Endothelial cell of umbilical vein (primary cell): ENCODE measurements at regions of chr11 and their contacts with region 1.

Region 1: DNA sequence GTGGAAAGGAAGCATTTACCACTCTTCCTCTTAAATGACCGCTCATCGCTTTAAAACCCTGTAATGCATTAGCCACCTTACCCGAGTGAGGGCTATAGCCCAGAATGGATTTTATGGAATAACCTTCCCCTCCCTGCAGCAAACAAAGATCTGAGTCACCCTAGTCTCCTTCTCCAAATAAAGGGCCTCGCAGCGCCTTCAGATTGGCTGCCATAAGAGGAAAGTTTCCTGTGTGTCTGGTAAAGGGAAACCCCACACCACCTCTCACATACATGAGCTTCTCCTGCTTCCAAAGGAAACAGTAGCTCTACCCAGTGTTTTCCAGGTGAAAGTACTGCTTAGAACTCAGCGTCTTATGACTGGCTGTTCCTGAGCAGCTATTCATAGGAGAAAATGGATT is 47.8 kb downstream of the PPP2R1B start:
- DNase-seq: peak; percentile 87
- H3K4me3 ChIP-seq: no peak overlapping the region
- H3K27ac ChIP-seq: peak overlapping the region; percentile 35
- H3K4me1 ChIP-seq: peaks cover 6% of the 10 kb centered on the region
- H3K27me3 ChIP-seq: no peaks in the 10 kb centered on the region
- CTCF ChIP-seq: no peak
- POLR2A ChIP-seq: no peak

Region 2: GRCh38 chr11:111635706-111636045 is 82.8 kb before region 1 on chr11:
- CTCF ChIA-PET with region 1: no interaction called
- POLR2A ChIA-PET with region 1: no interaction called
- dilution Hi-C with region 1: no loop called
- intact Hi-C with region 1: loop called (anchors 5 kb)
- DNase-seq: no peak
- H3K4me3 ChIP-seq: no peak overlapping the region
- H3K27ac ChIP-seq: no peak overlapping the region
- H3K4me1 ChIP-seq: peaks cover 23% of the 10 kb centered on the region
- H3K27me3 ChIP-seq: no peaks in the 10 kb centered on the region
- CTCF ChIP-seq: no peak
- POLR2A ChIP-seq: no peak

Region 3: GRCh38 chr11:111735262-111736116 is 17.1 kb after region 1 on chr11:
- CTCF ChIA-PET with region 1: interaction called, 8 read pairs
- POLR2A ChIA-PET with region 1: no interaction called
- dilution Hi-C with region 1: no loop called
- intact Hi-C with region 1: loop called (anchors 1 kb)
- DNase-seq: peak; percentile 98
- H3K4me3 ChIP-seq: no peak overlapping the region
- H3K27ac ChIP-seq: peak overlapping the region; percentile 85
- H3K4me1 ChIP-seq: peaks cover 59% of the 10 kb centered on the region
- H3K27me3 ChIP-seq: no peaks in the 10 kb centered on the region
- CTCF ChIP-seq: no peak
- POLR2A ChIP-seq: peak; percentile 67

Region 4: DNA sequence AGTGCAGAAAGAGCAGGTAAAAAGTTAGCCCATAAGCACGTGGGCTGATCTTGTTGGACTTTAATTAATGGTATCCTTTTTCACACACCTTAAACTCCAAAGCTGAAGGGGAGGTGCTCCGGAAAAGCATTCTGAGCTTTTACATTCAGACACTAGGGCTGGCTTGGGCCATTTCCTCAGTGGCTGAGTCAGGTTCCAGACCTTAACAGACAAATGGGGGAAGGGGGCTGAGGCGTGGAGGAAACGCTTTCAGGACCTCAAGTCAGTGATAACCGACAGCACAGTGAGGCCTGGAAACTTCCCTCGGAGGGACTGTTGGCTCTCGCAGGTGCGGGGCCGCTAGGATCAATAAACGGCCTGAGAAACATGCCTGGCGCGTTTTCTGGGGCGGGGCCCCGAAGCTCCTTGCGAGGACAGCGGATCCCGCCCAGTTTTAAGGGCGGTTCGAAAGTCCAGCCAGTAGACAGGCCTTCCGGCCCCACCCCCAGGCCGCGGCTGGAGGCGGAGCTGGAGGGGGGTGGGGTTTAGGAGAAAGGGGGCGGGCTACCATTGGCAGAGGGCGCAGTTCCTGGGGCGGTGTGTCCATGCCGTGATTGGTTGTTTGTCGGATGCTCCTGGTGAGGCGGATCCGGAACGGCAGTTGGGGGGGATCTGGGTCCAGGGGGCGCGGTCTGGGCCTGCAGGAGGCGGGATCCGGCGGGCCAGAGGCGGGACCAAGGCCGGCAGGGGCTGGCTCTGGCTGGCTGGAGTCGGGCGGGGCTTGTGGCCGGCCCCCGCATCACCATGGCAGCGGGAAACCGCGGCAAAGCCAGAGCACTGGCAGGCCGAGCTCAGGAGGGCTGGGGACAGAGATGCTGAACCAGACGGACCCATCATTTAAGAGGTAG is 208.3 kb after region 1 on chr11:
- CTCF ChIA-PET with region 1: no interaction called
- POLR2A ChIA-PET with region 1: no interaction called
- dilution Hi-C with region 1: no loop called
- intact Hi-C with region 1: no loop called
- DNase-seq: peak; percentile 98
- H3K4me3 ChIP-seq: peak overlapping the region; percentile 38 to 66 (median 38)
- H3K27ac ChIP-seq: peak overlapping the region; percentile 98
- H3K4me1 ChIP-seq: peaks cover 28% of the 10 kb centered on the region
- H3K27me3 ChIP-seq: no peaks in the 10 kb centered on the region
- CTCF ChIP-seq: peak in 1 of 2 donors; percentile 20
- POLR2A ChIP-seq: peak; percentile 88